Lower leg skin (tissue), 4 donors: ENCODE measurements at regions of chr5 and their contacts with region 1.

Region 1: DNA sequence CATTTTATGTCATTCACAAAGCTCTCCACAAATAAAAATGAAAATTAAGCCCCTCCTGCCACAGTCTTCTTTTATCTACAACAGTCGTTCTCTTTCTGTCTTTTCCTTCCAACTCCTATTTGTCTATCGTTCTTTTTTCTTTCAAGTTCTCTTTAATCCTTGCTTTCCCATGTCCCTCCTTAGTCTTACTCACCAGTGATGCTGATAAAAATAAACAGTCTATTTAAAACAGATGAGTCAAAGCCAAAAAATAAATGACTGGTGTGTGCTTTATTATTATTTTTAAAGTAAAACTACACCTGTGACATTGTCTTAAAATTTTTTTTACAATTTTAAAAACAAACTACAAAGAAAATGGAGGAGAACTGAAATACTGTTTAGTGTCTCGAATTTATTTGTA is 137.1 kb upstream of the TMEM161B start:
- DNase-seq: no peak
- H3K4me3 ChIP-seq: no peak overlapping the region
- CTCF ChIP-seq: no peak
- POLR2A ChIP-seq: no peak

Region 2: GRCh38 chr5:87132696-87133095 is 1273.1 kb before region 1 on chr5:
- intact Hi-C with region 1: loop called (anchors 5 kb)
- DNase-seq: no peak
- H3K4me3 ChIP-seq: no peak overlapping the region
- CTCF ChIP-seq: no peak
- POLR2A ChIP-seq: no peak